ENCODE measurements at regions of chr2 and their contacts with region 1.

Region 1: DNA sequence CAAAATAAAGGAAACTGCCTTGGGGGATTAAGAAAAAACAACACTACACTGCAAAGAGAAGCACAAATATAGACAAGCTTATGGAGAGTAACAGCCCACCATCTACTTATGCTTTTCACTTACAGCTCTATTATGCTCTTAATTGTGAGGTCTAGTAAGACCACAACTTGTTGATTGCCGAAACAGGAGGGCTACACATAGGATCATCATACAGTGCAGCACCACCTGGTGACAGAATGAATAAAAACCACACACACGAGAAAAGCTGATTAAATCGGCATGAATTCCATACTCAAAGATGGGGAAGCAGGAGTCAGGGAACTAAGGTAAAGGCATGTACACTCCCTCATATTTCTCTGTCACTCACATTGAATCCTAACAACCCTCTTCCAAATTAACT is 259.2 kb downstream of the IKZF2 start:
- DNase-seq: peak; percentile 68
- H3K4me3 ChIP-seq: no peak overlapping the region
- H3K27ac ChIP-seq: no peak overlapping the region
- H3K4me1 ChIP-seq: peaks cover 23% of the 10 kb centered on the region
- CTCF ChIP-seq: peak; percentile 78

Region 2: GRCh38 chr2:212596688-212597087 is 295.5 kb before region 1 on chr2:
- CTCF ChIA-PET with region 1: no interaction called
- POLR2A ChIA-PET with region 1: no interaction called
- intact Hi-C with region 1: no loop called
- DNase-seq: no peak
- H3K4me3 ChIP-seq: no peak overlapping the region
- H3K27ac ChIP-seq: no peak overlapping the region
- H3K4me1 ChIP-seq: no peaks in the 10 kb centered on the region
- CTCF ChIP-seq: no peak

Region 3: DNA sequence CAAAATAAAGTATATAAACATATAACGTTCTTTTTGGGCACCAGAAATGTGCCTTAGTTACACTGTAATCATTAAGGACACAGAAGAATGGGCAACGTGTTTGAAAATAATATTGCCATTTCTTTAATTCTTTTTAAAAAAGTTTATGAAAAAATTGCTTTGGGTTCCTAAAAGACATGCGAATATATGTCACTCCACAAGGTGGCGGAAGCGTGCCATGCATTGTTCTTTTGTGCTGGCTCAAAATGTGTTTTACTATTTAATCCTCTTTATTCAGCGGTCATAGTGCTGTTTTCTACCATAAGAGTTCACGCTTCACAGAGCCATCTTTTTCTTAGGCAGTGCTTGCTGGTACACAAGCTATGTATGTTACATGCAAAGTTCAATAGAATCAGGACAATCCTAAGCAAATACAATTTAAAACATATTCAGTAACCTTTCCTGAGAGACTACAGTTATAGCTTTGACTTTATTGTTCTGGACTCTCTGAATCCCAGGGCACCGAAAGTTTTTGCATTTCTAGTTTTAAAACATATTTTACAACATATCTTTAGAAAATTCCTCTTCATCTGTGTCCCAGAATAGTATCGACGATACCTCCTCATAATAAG is 205.8 kb before region 1 on chr2:
- CTCF ChIA-PET with region 1: no interaction called
- POLR2A ChIA-PET with region 1: no interaction called
- intact Hi-C with region 1: loop called (anchors 5 kb)
- DNase-seq: peak; percentile 73
- H3K4me3 ChIP-seq: no peak overlapping the region
- H3K27ac ChIP-seq: no peak overlapping the region
- H3K4me1 ChIP-seq: peaks cover 5% of the 10 kb centered on the region
- CTCF ChIP-seq: peak; percentile 98

Measured in OCI-LY7 (cell line).